ENCODE measurements at regions of chr1 and their contacts with region 1.

Region 1: DNA sequence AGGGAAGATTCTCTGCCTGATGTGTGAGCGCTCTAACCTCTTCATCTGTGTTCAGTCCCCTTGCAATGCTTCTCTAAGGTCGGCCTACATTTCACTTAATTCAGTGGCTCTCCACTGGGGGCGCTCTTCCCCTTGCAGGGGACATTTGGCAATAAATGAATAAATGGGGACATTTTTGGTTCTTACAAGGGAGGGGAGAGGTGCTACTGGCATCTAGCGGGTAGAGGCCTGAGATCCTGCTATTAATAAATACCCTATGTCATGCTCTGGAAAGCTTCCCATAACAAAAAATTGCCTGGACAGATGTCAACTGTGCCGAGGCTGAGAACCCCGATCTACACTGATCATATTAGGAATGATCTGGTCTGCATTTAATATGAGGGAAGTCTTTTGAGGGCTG is 25.9 kb upstream of the DNAJC11 start:
- DNase-seq: peak; percentile 80
- H3K4me3 ChIP-seq: no peak overlapping the region
- H3K27ac ChIP-seq: no peak overlapping the region
- H3K4me1 ChIP-seq: peaks cover 0 to 4% (median 0%) of the 10 kb centered on the region in 6 donors
- H3K27me3 ChIP-seq: peaks cover 0 to 3% (median 0%) of the 10 kb centered on the region in 7 donors
- CTCF ChIP-seq: peak; percentile 48 to 82 (median 72)
- POLR2A ChIP-seq: no peak

Region 2: GRCh38 chr1:6795661-6796060 is 68.1 kb after region 1 on chr1:
- intact Hi-C with region 1: no loop called
- DNase-seq: no peak
- H3K4me3 ChIP-seq: no peak overlapping the region
- H3K27ac ChIP-seq: peak overlapping the region in 3 of 8 donors; percentile 6 to 55 (median 11)
- H3K4me1 ChIP-seq: peaks cover 12 to 84% (median 37%) of the 10 kb centered on the region in 6 donors
- H3K27me3 ChIP-seq: no peaks in the 10 kb centered on the region
- CTCF ChIP-seq: no peak
- POLR2A ChIP-seq: no peak

Region 3: GRCh38 chr1:6889875-6890480 is 162.4 kb after region 1 on chr1:
- intact Hi-C with region 1: loop called (anchors 5 kb)
- DNase-seq: no peak
- H3K4me3 ChIP-seq: no peak overlapping the region
- H3K27ac ChIP-seq: no peak overlapping the region
- H3K4me1 ChIP-seq: peaks cover 0 to 10% (median 4%) of the 10 kb centered on the region in 6 donors
- H3K27me3 ChIP-seq: no peaks in the 10 kb centered on the region
- CTCF ChIP-seq: peak; percentile 32 to 88 (median 77)
- POLR2A ChIP-seq: no peak

Region 4: DNA sequence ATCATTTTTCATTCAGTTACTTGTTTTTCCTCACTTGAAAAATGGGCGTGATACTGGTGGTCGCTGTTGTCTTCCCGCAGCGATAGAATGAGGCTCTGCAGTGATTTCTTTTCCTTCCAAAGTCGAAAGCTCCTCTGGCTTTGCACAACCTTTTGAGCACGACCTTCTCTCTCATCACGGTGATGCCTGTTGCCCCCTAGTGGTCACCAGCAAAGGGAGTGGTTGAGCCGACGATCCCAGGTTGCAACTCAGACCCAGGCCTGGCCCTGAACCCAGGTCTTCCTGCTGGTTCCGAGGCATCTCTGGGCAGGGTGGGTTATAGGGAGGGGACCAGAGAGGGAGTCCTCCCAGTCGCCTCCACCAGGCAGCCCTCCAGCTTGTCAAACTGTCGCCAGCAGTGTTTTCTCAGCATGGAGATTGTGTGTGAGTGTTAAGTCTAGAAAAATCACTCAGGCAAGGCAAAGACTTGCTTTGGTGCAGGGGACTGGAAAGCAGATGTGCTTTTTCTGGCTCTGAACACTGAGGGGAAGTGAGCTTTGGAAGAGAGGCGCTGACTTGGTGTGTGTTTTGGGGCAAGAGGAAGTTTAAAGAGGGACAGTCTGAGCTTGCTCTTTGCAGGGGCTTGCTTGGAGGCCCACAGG is 343.0 kb after region 1 on chr1:
- intact Hi-C with region 1: loop called (anchors 5 kb)
- DNase-seq: no peak
- H3K4me3 ChIP-seq: peak overlapping the region in 6 of 8 donors; percentile 3 to 56 (median 22)
- H3K27ac ChIP-seq: no peak overlapping the region
- H3K4me1 ChIP-seq: peaks cover 0 to 12% (median 9%) of the 10 kb centered on the region in 6 donors
- H3K27me3 ChIP-seq: peaks cover 0 to 27% (median 0%) of the 10 kb centered on the region in 7 donors
- CTCF ChIP-seq: peak; percentile 13 to 81 (median 69)
- POLR2A ChIP-seq: no peak

Region 5: GRCh38 chr1:7218210-7218832 is 490.8 kb after region 1 on chr1:
- intact Hi-C with region 1: loop called (anchors 5 kb)
- DNase-seq: no peak
- H3K4me3 ChIP-seq: no peak overlapping the region
- H3K27ac ChIP-seq: no peak overlapping the region
- H3K4me1 ChIP-seq: no peaks in the 10 kb centered on the region
- H3K27me3 ChIP-seq: peaks cover 0 to 11% (median 0%) of the 10 kb centered on the region in 7 donors
- CTCF ChIP-seq: peak in 10 of 11 experiments; percentile 41 to 87 (median 65)
- POLR2A ChIP-seq: no peak